CD8-positive, alpha-beta T cell (primary cell): ENCODE measurements at regions of chr22 and their contacts with region 1.

Region 1: GRCh38 chr22:29837780-29838598 is at the start of gene ASCC2:
- DNase-seq: peak; percentile 97 to 100 (median 99)
- ATAC-seq: peak; percentile 98
- H3K4me3 ChIP-seq: peak within 1 kb of the TSS; percentile 76 to 85
- H3K4me3 Mint-ChIP-seq: peak within 1 kb of the TSS; percentile 92
- H3K27ac ChIP-seq: peak within 1 kb of the TSS; percentile 55 to 85
- H3K27ac Mint-ChIP-seq: peak within 1 kb of the TSS; percentile 97
- H3K4me1 ChIP-seq: peaks cover 15% of the 10 kb centered on the region
- H3K4me1 Mint-ChIP-seq: peaks cover 43% of the 10 kb centered on the region
- H3K27me3 ChIP-seq: no peaks in the 10 kb centered on the region
- H3K27me3 Mint-ChIP-seq: no peaks in the 10 kb centered on the region
- CTCF ChIP-seq: no peak
- total RNA-seq, gene ASCC2: 66.2 to 76.5 TPM

Region 2: GRCh38 chr22:29302681-29303465 is 535.1 kb before region 1 on chr22:
- CTCF ChIA-PET with region 1: no interaction called
- POLR2A ChIA-PET with region 1: no interaction called
- intact Hi-C with region 1: no loop called
- DNase-seq: no peak
- ATAC-seq: no peak
- H3K4me3 ChIP-seq: no peak overlapping the region
- H3K4me3 Mint-ChIP-seq: no peak overlapping the region
- H3K27ac ChIP-seq: no peak overlapping the region
- H3K27ac Mint-ChIP-seq: no peak overlapping the region
- H3K4me1 ChIP-seq: peaks cover 9% of the 10 kb centered on the region
- H3K4me1 Mint-ChIP-seq: peaks cover 8% of the 10 kb centered on the region
- H3K27me3 ChIP-seq: peaks cover 6 to 11% of the 10 kb centered on the region in 2 experiments
- H3K27me3 Mint-ChIP-seq: peaks cover 18% of the 10 kb centered on the region
- CTCF ChIP-seq: no peak

Region 3: GRCh38 chr22:29408945-29409344 is 429.0 kb before region 1 on chr22:
- CTCF ChIA-PET with region 1: no interaction called
- POLR2A ChIA-PET with region 1: no interaction called
- intact Hi-C with region 1: loop called in 1 of 2 experiments (anchors 10 kb)
- DNase-seq: no peak
- ATAC-seq: no peak
- H3K4me3 ChIP-seq: no peak overlapping the region
- H3K4me3 Mint-ChIP-seq: no peak overlapping the region
- H3K27ac ChIP-seq: no peak overlapping the region
- H3K27ac Mint-ChIP-seq: no peak overlapping the region
- H3K4me1 ChIP-seq: no peaks in the 10 kb centered on the region
- H3K4me1 Mint-ChIP-seq: peaks cover 4% of the 10 kb centered on the region
- H3K27me3 ChIP-seq: no peaks in the 10 kb centered on the region
- H3K27me3 Mint-ChIP-seq: no peaks in the 10 kb centered on the region
- CTCF ChIP-seq: no peak

Region 4: DNA sequence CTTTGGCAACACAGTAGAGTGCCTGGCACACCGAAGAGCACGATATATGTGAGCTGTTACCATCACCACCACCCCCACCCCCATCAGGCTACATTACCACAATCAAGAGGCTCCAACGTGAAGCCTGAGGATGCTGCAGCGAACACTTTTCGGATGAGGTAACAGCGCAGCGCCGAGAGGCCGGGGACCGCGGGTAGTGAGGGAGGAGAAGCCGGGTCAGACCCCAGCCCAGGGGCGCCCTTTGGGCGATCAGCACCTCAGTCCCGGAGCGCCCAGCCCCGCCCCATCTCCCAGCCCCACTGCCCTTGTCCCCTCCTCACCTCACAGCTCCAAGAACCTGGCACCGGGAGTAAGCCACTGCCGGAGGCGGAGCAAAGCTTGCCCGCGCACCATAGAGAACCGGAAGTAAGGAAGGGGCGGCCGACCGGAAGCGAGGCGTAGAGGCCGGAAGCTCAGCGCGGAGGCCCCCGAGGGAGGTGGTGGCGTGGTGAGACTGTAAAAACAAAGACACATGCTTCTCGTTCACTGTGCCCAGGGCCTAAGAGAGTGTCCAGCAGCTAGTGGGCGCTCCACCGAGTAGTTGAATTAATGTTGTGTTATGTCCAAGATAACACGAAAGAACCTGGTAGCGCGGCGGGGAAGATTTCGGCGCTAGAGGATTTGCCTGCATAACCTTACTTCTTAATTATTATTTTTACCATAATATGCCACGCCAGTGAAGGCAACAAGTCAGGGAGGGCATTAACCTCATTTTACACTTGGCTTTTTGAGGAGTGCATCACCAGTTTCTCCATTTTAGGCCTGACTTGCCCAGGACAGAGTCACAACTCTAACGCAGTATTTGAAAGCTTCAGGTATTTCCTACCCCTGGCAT is 284.4 kb before region 1 on chr22 and contains the start of gene THOC5:
- CTCF ChIA-PET with region 1: no interaction called
- POLR2A ChIA-PET with region 1: no interaction called
- intact Hi-C with region 1: loop called (anchors 1 to 5 kb)
- DNase-seq: peak; percentile 73 to 94 (median 91)
- ATAC-seq: peak; percentile 95
- H3K4me3 ChIP-seq: peak within 1 kb of the TSS; percentile 57 to 94
- H3K4me3 Mint-ChIP-seq: peak within 1 kb of the TSS; percentile 88
- H3K27ac ChIP-seq: peak within 1 kb of the TSS; percentile 61 to 66
- H3K27ac Mint-ChIP-seq: peak within 1 kb of the TSS; percentile 96
- H3K4me1 ChIP-seq: peaks cover 7% of the 10 kb centered on the region
- H3K4me1 Mint-ChIP-seq: peaks cover 27% of the 10 kb centered on the region
- H3K27me3 ChIP-seq: no peaks in the 10 kb centered on the region
- H3K27me3 Mint-ChIP-seq: no peaks in the 10 kb centered on the region
- CTCF ChIP-seq: no peak
- total RNA-seq, gene THOC5: 33.5 to 35.0 TPM

Region 5: DNA sequence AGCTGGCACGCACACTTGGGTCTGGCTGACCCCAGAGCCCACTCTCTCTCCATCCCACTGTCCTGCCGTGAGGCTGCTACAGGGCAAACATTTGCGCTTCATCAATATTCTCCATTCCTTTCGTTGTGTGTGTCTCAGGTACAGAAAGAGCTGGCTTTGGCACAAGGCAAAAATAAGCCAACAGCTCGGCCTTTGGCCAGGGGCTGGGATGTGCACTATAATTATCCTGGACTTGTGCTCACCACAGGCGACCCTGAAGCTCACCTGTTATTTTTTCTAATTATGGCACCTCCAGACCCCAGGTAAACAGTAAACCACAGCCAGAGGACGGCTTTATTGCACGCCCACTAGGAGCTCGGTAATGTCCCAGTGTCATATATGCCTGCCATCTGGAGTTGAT is 82.1 kb before region 1 on chr22:
- CTCF ChIA-PET with region 1: no interaction called
- POLR2A ChIA-PET with region 1: no interaction called
- intact Hi-C with region 1: no loop called
- DNase-seq: no peak
- ATAC-seq: no peak
- H3K4me3 ChIP-seq: no peak overlapping the region
- H3K4me3 Mint-ChIP-seq: no peak overlapping the region
- H3K27ac ChIP-seq: no peak overlapping the region
- H3K27ac Mint-ChIP-seq: no peak overlapping the region
- H3K4me1 ChIP-seq: no peaks in the 10 kb centered on the region
- H3K4me1 Mint-ChIP-seq: peaks cover 4% of the 10 kb centered on the region
- H3K27me3 ChIP-seq: no peaks in the 10 kb centered on the region
- H3K27me3 Mint-ChIP-seq: no peaks in the 10 kb centered on the region
- CTCF ChIP-seq: no peak

Region 6: GRCh38 chr22:29780748-29781676 is 57.0 kb before region 1 on chr22:
- CTCF ChIA-PET with region 1: no interaction called
- POLR2A ChIA-PET with region 1: no interaction called
- intact Hi-C with region 1: no loop called
- DNase-seq: no peak
- ATAC-seq: no peak
- H3K4me3 ChIP-seq: no peak overlapping the region
- H3K4me3 Mint-ChIP-seq: no peak overlapping the region
- H3K27ac ChIP-seq: no peak overlapping the region
- H3K27ac Mint-ChIP-seq: no peak overlapping the region
- H3K4me1 ChIP-seq: no peaks in the 10 kb centered on the region
- H3K4me1 Mint-ChIP-seq: no peaks in the 10 kb centered on the region
- H3K27me3 ChIP-seq: no peaks in the 10 kb centered on the region
- H3K27me3 Mint-ChIP-seq: no peaks in the 10 kb centered on the region
- CTCF ChIP-seq: no peak

Region 7: GRCh38 chr22:29883045-29883774 is 45.2 kb after region 1 on chr22 and contains the start of gene MTMR3:
- CTCF ChIA-PET with region 1: interaction called, 4 read pairs
- POLR2A ChIA-PET with region 1: interaction called, 12 read pairs
- intact Hi-C with region 1: loop called (anchors 1 kb)
- DNase-seq: peak; percentile 75 to 95 (median 93)
- ATAC-seq: peak; percentile 81
- H3K4me3 ChIP-seq: peak within 1 kb of the TSS; percentile 75 to 87
- H3K4me3 Mint-ChIP-seq: peak within 1 kb of the TSS; percentile 69
- H3K27ac ChIP-seq: peak within 1 kb of the TSS; percentile 72 to 80
- H3K27ac Mint-ChIP-seq: peak within 1 kb of the TSS; percentile 90
- H3K4me1 ChIP-seq: peaks cover 20% of the 10 kb centered on the region
- H3K4me1 Mint-ChIP-seq: peaks cover 8% of the 10 kb centered on the region
- H3K27me3 ChIP-seq: no peaks in the 10 kb centered on the region
- H3K27me3 Mint-ChIP-seq: peaks cover 3% of the 10 kb centered on the region
- CTCF ChIP-seq: peak; percentile 52
- total RNA-seq, gene MTMR3: 46.7 to 51.7 TPM